CD4-positive, alpha-beta T cell (primary cell): ENCODE measurements at regions of chr1 and their contacts with region 1.

Region 1: DNA sequence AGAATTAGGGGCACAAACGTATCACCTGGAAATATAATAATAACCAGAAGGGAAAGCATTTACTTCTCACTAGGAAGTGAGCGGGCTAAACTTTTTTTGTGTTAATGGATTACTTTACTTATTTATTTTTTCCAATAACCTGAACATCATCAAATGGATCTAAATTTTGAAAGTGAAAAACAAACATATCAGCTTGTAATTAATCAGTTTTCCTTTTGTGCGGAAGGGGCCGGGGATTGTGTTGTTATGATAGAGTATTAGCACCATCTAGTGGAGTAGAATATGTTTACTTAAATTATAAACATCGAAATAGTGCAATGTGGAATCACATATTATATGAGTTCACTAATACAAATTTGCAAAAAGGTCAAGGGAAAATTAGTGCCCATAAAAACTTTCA is 9.0 kb downstream of the CFH start:
- DNase-seq: peak in 4 of 14 experiments; percentile 13 to 46 (median 44)
- ATAC-seq: peak; percentile 46
- H3K4me3 ChIP-seq: no peak overlapping the region
- H3K4me3 Mint-ChIP-seq: no peak overlapping the region
- H3K27ac ChIP-seq: no peak overlapping the region
- H3K27ac Mint-ChIP-seq: no peak overlapping the region
- H3K4me1 ChIP-seq: no peaks in the 10 kb centered on the region
- H3K4me1 Mint-ChIP-seq: no peaks in the 10 kb centered on the region
- H3K27me3 ChIP-seq: no peaks in the 10 kb centered on the region
- H3K27me3 Mint-ChIP-seq: no peaks in the 10 kb centered on the region
- CTCF ChIP-seq: peak; percentile 65

Region 2: DNA sequence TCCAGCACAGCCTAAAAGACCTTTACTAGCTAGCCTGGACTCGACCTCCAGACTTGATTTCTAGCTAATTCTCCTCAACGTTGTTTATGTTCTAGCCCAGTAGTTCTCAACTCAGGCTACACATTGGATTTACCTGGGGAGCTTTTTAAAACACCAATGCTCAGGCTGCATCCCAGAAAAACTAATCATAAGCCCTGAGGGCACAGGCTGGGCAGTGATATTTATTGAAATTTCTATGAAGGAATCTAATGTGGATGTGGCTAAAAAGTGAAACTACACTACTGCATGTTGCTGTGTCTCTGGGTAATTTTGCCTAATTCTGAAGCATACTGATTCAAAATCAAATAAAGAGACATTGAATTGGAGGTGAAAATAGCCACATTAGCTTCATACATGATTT is 532.0 kb before region 1 on chr1:
- CTCF ChIA-PET with region 1: no interaction called
- POLR2A ChIA-PET with region 1: no interaction called
- intact Hi-C with region 1: no loop called
- DNase-seq: no peak
- ATAC-seq: no peak
- H3K4me3 ChIP-seq: no peak overlapping the region
- H3K4me3 Mint-ChIP-seq: no peak overlapping the region
- H3K27ac ChIP-seq: no peak overlapping the region
- H3K27ac Mint-ChIP-seq: no peak overlapping the region
- H3K4me1 ChIP-seq: no peaks in the 10 kb centered on the region
- H3K4me1 Mint-ChIP-seq: no peaks in the 10 kb centered on the region
- H3K27me3 ChIP-seq: no peaks in the 10 kb centered on the region
- H3K27me3 Mint-ChIP-seq: no peaks in the 10 kb centered on the region
- CTCF ChIP-seq: no peak

Region 3: DNA sequence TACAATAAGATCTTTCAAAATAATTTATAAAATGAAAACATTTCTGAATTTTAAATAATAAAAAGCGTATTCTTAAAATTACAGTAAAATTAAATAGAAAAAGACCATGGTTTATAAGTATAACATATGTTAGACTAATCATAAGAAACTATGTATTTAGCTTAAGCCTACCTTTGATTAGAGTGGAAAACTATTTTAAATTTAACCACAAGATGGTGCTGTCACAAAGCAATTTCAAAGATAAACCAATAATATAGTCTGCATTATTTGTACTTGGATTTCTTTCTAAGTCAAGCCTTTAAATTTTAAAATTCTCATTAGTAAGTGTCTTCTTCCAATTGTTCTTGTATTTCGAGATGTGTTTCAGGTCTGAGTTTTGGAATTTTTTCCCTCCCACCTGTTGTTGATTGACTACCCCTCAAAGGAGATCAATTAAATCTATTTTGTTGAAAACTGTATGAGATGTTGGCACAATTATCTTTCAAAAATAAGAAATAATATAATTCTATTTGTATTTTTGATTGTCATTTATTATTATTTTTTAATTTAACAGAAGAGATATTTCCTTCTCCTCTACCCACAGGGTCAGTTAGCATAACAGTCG is 512.4 kb before region 1 on chr1:
- CTCF ChIA-PET with region 1: interaction called, 3 read pairs
- POLR2A ChIA-PET with region 1: no interaction called
- intact Hi-C with region 1: loop called (anchors 1 to 2 kb)
- DNase-seq: peak in 3 of 14 experiments; percentile 19 to 36 (median 21)
- ATAC-seq: no peak
- H3K4me3 ChIP-seq: no peak overlapping the region
- H3K4me3 Mint-ChIP-seq: no peak overlapping the region
- H3K27ac ChIP-seq: no peak overlapping the region
- H3K27ac Mint-ChIP-seq: no peak overlapping the region
- H3K4me1 ChIP-seq: no peaks in the 10 kb centered on the region
- H3K4me1 Mint-ChIP-seq: no peaks in the 10 kb centered on the region
- H3K27me3 ChIP-seq: no peaks in the 10 kb centered on the region
- H3K27me3 Mint-ChIP-seq: no peaks in the 10 kb centered on the region
- CTCF ChIP-seq: peak; percentile 55

Region 4: DNA sequence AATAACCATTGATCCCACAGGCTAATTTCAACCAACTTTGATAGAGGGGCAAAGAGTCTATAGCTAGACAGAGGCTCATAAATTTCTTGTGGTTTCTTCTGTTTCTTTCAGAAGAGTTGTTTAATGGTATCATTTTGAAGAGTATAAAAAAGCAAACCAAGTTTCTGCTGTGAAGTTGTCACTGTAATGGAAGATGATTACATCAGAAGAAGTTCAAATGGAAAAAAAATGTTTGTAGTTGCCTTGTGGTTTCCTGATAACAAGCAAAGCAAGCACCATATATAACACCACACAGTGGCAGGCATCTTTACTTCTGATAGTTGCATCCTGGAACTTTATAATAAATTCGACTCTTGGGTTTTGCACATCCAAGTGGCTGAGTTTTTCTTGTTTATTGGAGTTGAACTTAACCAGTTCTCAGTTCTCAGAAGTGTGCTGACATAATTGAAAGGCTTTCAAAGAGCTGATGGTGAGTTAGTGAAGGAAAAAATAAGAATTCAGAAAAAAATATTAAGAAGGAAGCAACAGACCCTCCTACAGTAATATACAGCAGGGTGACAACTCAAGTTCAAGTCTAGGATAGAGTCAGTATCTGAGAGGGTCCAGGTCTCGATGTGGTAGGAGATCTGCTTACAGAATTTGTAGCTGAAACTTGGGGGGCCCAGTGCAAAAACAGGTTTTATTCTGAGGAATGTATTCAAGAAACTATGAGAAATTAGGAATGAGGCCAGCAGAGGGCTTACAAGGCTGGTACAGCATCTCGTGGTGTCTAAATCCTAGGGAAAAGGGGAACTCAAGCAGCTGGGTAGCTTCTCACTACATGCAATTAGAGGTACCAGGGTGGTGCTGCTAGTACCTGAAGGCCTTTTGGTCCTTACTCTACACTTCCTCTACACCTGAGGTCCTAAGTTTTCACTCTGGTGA is 730.7 kb after region 1 on chr1:
- CTCF ChIA-PET with region 1: no interaction called
- POLR2A ChIA-PET with region 1: no interaction called
- intact Hi-C with region 1: no loop called
- DNase-seq: peak in 4 of 14 experiments; percentile 3 to 79 (median 74)
- ATAC-seq: peak; percentile 85
- H3K4me3 ChIP-seq: no peak overlapping the region
- H3K4me3 Mint-ChIP-seq: peak overlapping the region; percentile 57
- H3K27ac ChIP-seq: peak overlapping the region in 1 of 2 donors; percentile 26
- H3K27ac Mint-ChIP-seq: peak overlapping the region; percentile 89
- H3K4me1 ChIP-seq: peaks cover 13% of the 10 kb centered on the region
- H3K4me1 Mint-ChIP-seq: peaks cover 50% of the 10 kb centered on the region
- H3K27me3 ChIP-seq: no peaks in the 10 kb centered on the region
- H3K27me3 Mint-ChIP-seq: no peaks in the 10 kb centered on the region
- CTCF ChIP-seq: no peak